Endothelial cell of umbilical vein (primary cell): ENCODE measurements at regions of chr15 and their contacts with region 1.

Region 1: GRCh38 chr15:73908030-73908821 is 18.0 kb upstream of the LOXL1 start:
- DNase-seq: peak; percentile 63
- H3K4me3 ChIP-seq: no peak overlapping the region
- H3K27ac ChIP-seq: no peak overlapping the region
- H3K4me1 ChIP-seq: no peaks in the 10 kb centered on the region
- H3K27me3 ChIP-seq: peaks cover 0 to 10% of the 10 kb centered on the region in 2 experiments
- CTCF ChIP-seq: peak; percentile 92 to 95
- POLR2A ChIP-seq: no peak

Region 2: GRCh38 chr15:73891328-73892315 is 16.6 kb before region 1 on chr15:
- CTCF ChIA-PET with region 1: interaction called, 12 read pairs
- POLR2A ChIA-PET with region 1: no interaction called
- dilution Hi-C with region 1: no loop called
- intact Hi-C with region 1: no loop called
- DNase-seq: no peak
- H3K4me3 ChIP-seq: no peak overlapping the region
- H3K27ac ChIP-seq: no peak overlapping the region
- H3K4me1 ChIP-seq: no peaks in the 10 kb centered on the region
- H3K27me3 ChIP-seq: peaks cover 0 to under 1% of the 10 kb centered on the region in 2 experiments
- CTCF ChIP-seq: no peak
- POLR2A ChIP-seq: no peak

Region 3: DNA sequence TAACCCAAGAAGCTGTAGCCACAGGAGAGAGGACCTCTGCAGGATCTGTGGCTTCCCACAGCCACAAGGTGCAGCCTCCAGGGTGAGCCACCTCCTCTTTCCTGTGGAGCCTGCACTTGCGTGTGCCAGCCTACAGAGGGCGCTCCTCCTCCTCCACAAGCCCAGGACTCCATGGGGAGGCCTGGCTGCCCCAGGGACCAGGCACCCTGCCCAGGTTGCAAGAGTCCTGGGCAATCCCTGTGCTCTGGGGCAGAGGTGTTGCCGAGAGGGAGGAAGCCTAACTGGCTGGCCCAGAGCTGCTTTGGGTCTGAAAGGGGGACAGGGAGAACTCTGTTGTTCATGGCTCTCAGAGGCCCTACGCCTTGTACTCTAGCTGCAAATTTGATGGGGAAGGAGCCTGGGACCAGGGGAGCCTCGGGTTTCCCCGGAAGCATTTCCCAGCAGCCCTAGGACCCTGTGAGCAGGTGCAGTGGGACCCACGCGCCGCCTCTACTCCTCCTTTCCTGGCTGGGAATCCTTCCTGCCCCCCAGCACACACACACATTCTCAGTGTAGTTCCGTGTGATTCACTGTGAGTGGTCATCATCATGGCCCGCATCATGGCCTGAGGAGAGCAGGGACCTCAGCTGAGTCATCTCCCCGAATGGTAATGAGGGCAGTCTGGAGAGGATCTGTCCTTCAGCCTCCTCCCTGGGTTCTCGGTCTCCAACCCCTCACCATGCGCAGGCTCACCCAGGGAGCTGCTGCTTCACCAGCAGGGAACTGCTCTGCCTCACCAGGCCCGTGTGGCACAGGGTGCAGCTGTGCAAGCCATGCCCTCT is 10.6 kb before region 1 on chr15:
- CTCF ChIA-PET with region 1: interaction called, 19 read pairs
- POLR2A ChIA-PET with region 1: no interaction called
- dilution Hi-C with region 1: no loop called
- intact Hi-C with region 1: loop called (anchors 1 kb)
- DNase-seq: peak; percentile 65
- H3K4me3 ChIP-seq: no peak overlapping the region
- H3K27ac ChIP-seq: no peak overlapping the region
- H3K4me1 ChIP-seq: no peaks in the 10 kb centered on the region
- H3K27me3 ChIP-seq: peaks cover 0 to 1% of the 10 kb centered on the region in 2 experiments
- CTCF ChIP-seq: peak; percentile 90 to 96
- POLR2A ChIP-seq: no peak

Region 4: DNA sequence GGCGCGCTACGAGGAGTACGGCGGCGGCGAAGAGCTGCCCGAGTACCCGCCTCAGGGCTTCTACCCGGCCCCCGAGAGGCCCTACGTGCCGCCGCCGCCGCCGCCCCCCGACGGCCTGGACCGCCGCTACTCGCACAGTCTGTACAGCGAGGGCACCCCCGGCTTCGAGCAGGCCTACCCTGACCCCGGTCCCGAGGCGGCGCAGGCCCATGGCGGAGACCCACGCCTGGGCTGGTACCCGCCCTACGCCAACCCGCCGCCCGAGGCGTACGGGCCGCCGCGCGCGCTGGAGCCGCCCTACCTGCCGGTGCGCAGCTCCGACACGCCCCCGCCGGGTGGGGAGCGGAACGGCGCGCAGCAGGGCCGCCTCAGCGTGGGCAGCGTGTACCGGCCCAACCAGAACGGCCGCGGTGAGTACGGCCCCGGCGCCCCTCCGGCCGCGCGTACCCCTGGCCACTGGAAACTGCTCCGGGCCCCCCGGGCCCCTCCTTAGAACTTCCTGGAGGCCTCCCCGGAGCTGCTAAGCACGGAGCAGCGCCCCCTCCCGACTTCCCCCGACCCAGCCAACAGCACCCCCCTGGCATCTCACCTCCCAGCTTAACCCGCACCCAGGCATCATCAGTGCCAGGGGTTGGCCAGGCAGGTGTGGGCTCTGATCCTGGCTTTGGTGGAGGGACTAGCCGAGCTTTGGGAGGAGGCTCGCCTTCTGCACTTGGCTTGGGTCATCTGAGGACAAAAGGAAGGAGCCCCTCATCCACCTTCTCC is 19.4 kb after region 1 on chr15:
- CTCF ChIA-PET with region 1: interaction called, 20 read pairs
- POLR2A ChIA-PET with region 1: no interaction called
- dilution Hi-C with region 1: no loop called
- intact Hi-C with region 1: no loop called
- DNase-seq: peak; percentile 45
- H3K4me3 ChIP-seq: peak overlapping the region in 1 of 3 experiments; percentile 45
- H3K27ac ChIP-seq: no peak overlapping the region
- H3K4me1 ChIP-seq: peaks cover 24% of the 10 kb centered on the region
- H3K27me3 ChIP-seq: no peaks in the 10 kb centered on the region
- CTCF ChIP-seq: peak; percentile 28 to 51
- POLR2A ChIP-seq: no peak

Region 5: DNA sequence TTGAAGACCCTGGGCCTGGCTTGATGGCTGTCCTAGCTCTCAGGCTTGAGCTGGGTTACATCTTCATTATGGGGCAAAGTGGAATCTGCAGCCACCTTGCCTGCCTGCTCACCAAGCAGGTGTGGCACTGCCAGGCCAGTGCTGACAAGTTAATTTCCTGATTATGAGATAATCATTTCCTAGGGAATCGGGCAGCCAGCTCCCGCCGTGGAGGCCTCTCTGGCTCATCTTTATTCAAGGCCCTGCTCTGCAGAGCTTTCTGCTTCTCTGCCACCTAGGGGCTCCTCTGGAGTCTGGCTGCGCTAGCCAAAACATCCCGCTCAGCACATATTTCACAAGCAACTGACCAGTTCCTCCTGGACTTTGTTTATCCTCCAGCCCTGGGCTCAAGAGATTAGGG is 28.0 kb after region 1 on chr15:
- CTCF ChIA-PET with region 1: interaction called, 11 read pairs
- POLR2A ChIA-PET with region 1: no interaction called
- dilution Hi-C with region 1: no loop called
- intact Hi-C with region 1: no loop called
- DNase-seq: no peak
- H3K4me3 ChIP-seq: no peak overlapping the region
- H3K27ac ChIP-seq: no peak overlapping the region
- H3K4me1 ChIP-seq: peaks cover 24% of the 10 kb centered on the region
- H3K27me3 ChIP-seq: no peaks in the 10 kb centered on the region
- CTCF ChIP-seq: peak in 1 of 2 donors; percentile 20
- POLR2A ChIP-seq: no peak